B cell (primary cell): ENCODE measurements at regions of chr19 and their contacts with region 1.

Region 1: GRCh38 chr19:57031106-57031505 is 88.7 kb upstream of the USP29 start:
- DNase-seq: no peak
- ATAC-seq: no peak
- H3K4me3 ChIP-seq: no peak overlapping the region
- H3K4me3 Mint-ChIP-seq: no peak overlapping the region
- H3K27ac ChIP-seq: no peak overlapping the region
- H3K27ac Mint-ChIP-seq: no peak overlapping the region
- H3K4me1 ChIP-seq: no peaks in the 10 kb centered on the region
- H3K4me1 Mint-ChIP-seq: no peaks in the 10 kb centered on the region
- H3K27me3 ChIP-seq: no peaks in the 10 kb centered on the region
- H3K27me3 Mint-ChIP-seq: no peaks in the 10 kb centered on the region
- CTCF ChIP-seq: no peak

Region 2: DNA sequence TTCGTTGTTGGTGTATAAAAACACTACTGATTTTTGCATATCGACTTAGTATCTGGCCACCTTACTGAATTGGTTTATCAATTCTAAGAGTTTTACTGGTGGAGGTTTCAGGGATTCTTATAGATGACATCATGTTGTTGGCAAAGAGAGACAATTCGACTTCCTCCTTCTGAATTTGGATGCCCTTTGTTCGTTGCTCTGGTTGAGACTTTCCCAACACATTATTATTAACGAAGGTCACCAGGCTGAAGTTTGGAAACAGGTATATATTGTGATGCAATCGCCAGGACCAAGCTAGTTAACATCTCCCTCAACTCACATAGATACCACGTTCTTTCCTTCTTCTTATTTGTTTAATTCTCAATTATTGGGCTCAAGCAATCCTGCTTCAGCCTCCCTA is 831.4 kb before region 1 on chr19:
- CTCF ChIA-PET with region 1: no interaction called
- POLR2A ChIA-PET with region 1: interaction called, 10 read pairs
- intact Hi-C with region 1: no loop called
- DNase-seq: no peak
- ATAC-seq: no peak
- H3K4me3 ChIP-seq: no peak overlapping the region
- H3K4me3 Mint-ChIP-seq: no peak overlapping the region
- H3K27ac ChIP-seq: no peak overlapping the region
- H3K27ac Mint-ChIP-seq: no peak overlapping the region
- H3K4me1 ChIP-seq: no peaks in the 10 kb centered on the region
- H3K4me1 Mint-ChIP-seq: no peaks in the 10 kb centered on the region
- H3K27me3 ChIP-seq: peaks cover 0 to 3% (median 0%) of the 10 kb centered on the region in 4 experiments
- H3K27me3 Mint-ChIP-seq: peaks cover 15% of the 10 kb centered on the region
- CTCF ChIP-seq: no peak

Region 3: GRCh38 chr19:57047743-57048142 is 16.6 kb after region 1 on chr19:
- CTCF ChIA-PET with region 1: no interaction called
- POLR2A ChIA-PET with region 1: no interaction called
- intact Hi-C with region 1: no loop called
- DNase-seq: no peak
- ATAC-seq: no peak
- H3K4me3 ChIP-seq: no peak overlapping the region
- H3K4me3 Mint-ChIP-seq: no peak overlapping the region
- H3K27ac ChIP-seq: no peak overlapping the region
- H3K27ac Mint-ChIP-seq: no peak overlapping the region
- H3K4me1 ChIP-seq: no peaks in the 10 kb centered on the region
- H3K4me1 Mint-ChIP-seq: no peaks in the 10 kb centered on the region
- H3K27me3 ChIP-seq: no peaks in the 10 kb centered on the region
- H3K27me3 Mint-ChIP-seq: no peaks in the 10 kb centered on the region
- CTCF ChIP-seq: no peak